HCT116 (cell line): ENCODE measurements at regions of chr15 and their contacts with region 1.

Region 1: GRCh38 chr15:66851226-66852071 is 149.4 kb downstream of the SMAD6 start:
- DNase-seq: peak; percentile 59
- ATAC-seq: peak; percentile 94
- H3K4me3 ChIP-seq: no peak overlapping the region
- H3K27ac ChIP-seq: no peak overlapping the region
- H3K4me1 ChIP-seq: peaks cover 11 to 18% of the 10 kb centered on the region in 2 experiments; a peak in 3 of 4 replicates
- H3K27me3 ChIP-seq: no peaks in the 10 kb centered on the region
- CTCF ChIP-seq: peak; percentile 87 to 95 (median 94)
- POLR2A ChIP-seq: no peak
- RAD21 ChIP-seq: peak; percentile 86

Region 2: GRCh38 chr15:66603301-66604179 is 247.9 kb before region 1 on chr15:
- CTCF ChIA-PET with region 1: interaction called, 22 read pairs
- POLR2A ChIA-PET with region 1: no interaction called
- RAD21 ChIA-PET with region 1: interaction called, 3 to 12 read pairs
- intact Hi-C with region 1: loop called (anchors 1 kb)
- DNase-seq: peak; percentile 43
- ATAC-seq: peak; percentile 99
- H3K4me3 ChIP-seq: no peak overlapping the region
- H3K27ac ChIP-seq: no peak overlapping the region
- H3K4me1 ChIP-seq: peaks cover 0 to 3% of the 10 kb centered on the region in 2 experiments; a peak in 1 of 4 replicates
- H3K27me3 ChIP-seq: no peaks in the 10 kb centered on the region; the same call in 1 of the 2 replicates
- CTCF ChIP-seq: peak; percentile 80 to 93 (median 84)
- POLR2A ChIP-seq: no peak
- RAD21 ChIP-seq: peak; percentile 94

Region 3: GRCh38 chr15:66700802-66701421 is 150.5 kb before region 1 on chr15:
- CTCF ChIA-PET with region 1: interaction called, 15 read pairs
- POLR2A ChIA-PET with region 1: no interaction called
- RAD21 ChIA-PET with region 1: interaction called, 3 to 4 read pairs
- intact Hi-C with region 1: loop called (anchors 5 kb)
- DNase-seq: peak; percentile 87
- ATAC-seq: peak; percentile 70
- H3K4me3 ChIP-seq: peak overlapping the region; percentile 55 to 74
- H3K27ac ChIP-seq: peak overlapping the region; percentile 79
- H3K4me1 ChIP-seq: peaks cover 27 to 62% of the 10 kb centered on the region in 2 experiments
- H3K27me3 ChIP-seq: no peaks in the 10 kb centered on the region
- CTCF ChIP-seq: no peak
- POLR2A ChIP-seq: no peak
- RAD21 ChIP-seq: no peak

Region 4: DNA sequence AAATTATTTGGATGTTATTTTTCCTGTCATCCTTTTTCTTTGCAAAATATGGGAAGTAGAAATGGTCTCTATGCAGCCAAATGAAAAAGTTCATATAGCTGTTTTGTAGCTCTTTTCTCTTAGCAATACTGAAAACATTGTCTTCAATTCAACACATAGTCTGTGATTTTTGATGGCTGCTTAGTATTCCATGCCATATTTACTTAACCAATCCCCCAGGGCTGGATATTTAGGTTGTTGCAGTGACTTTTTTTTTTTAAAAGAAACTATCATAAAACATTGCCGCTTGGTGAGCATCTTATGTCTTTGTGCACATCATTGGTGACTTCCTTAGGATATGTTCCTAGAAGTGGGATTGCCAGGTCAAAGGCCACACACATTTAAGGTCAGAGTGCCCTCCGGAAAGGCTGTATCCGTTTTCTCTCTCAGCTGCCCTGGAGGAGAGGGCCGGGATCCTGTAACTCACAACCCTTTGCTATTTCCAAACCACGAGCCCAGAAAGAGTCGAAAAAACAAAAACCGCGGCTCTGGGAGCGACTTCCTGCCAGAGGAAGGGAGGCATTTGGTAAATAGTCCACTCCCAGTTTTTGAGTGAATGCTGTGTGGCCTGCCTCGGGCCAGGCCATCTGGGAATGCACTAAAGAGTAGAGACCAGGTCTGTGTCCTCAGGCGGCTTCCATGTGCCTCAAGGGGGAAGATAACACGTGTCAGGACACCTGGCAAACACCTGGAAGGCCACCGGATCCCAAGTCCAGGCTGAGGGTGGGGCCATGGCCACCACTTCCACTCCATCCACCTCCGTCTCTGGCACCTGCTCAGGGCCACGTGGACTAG is 107.5 kb before region 1 on chr15:
- CTCF ChIA-PET with region 1: no interaction called
- POLR2A ChIA-PET with region 1: no interaction called
- RAD21 ChIA-PET with region 1: no interaction called
- intact Hi-C with region 1: no loop called
- DNase-seq: no peak
- ATAC-seq: no peak
- H3K4me3 ChIP-seq: no peak overlapping the region
- H3K27ac ChIP-seq: peak overlapping the region; percentile 1; the same call in 1 of the 2 replicates
- H3K4me1 ChIP-seq: peaks cover 42 to 47% of the 10 kb centered on the region in 2 experiments
- H3K27me3 ChIP-seq: no peaks in the 10 kb centered on the region
- CTCF ChIP-seq: no peak
- POLR2A ChIP-seq: no peak
- RAD21 ChIP-seq: no peak

Region 5: DNA sequence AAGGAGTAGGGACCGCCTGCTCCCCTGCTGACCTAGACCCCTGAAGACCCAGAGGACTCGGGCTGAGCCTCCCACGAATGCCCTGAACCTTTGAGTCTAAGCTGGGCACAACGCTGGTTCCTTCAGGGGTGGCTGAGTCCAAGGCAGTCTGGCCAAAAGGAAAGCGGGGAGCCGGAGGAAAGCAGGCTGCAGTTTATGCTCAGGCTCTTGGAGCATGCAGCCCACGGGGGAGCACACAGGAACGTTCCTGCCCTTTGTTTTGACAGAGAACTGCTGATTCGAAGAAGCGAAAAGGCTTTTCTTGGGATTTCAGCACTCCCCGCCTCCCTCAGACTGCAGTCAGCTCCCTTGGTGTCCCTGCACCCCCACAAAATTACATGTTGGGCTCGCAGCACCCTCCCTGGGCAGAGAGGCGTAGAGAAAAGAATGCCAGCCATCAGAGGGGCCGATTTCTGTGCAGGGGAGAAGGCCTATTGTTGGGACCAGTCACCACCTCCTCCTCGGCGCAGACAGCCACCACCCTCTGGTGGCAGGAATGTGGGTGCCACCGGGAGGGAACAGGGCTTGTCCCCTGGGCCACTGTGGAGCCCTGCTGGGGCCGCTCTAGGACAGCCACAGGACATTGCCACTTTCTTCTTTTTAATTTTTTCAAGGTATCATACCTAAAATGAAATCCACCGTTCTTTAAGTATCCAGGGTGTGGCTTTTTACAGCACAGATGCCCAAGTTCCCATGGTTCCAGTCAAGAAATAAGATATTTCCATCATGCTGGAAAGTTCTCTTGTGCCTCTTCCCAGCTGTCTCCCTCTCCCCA is 77.2 kb before region 1 on chr15:
- CTCF ChIA-PET with region 1: interaction called, 22 read pairs
- POLR2A ChIA-PET with region 1: no interaction called
- RAD21 ChIA-PET with region 1: interaction called in 1 of 2 experiments, 3 read pairs
- intact Hi-C with region 1: loop called (anchors 1 kb)
- DNase-seq: peak; percentile 72
- ATAC-seq: peak; percentile 97
- H3K4me3 ChIP-seq: no peak overlapping the region
- H3K27ac ChIP-seq: peak overlapping the region; percentile 44
- H3K4me1 ChIP-seq: peaks cover 68 to 76% of the 10 kb centered on the region in 2 experiments
- H3K27me3 ChIP-seq: no peaks in the 10 kb centered on the region
- CTCF ChIP-seq: peak; percentile 98 to 99 (median 99)
- POLR2A ChIP-seq: no peak
- RAD21 ChIP-seq: peak; percentile 100

Region 6: GRCh38 chr15:66789029-66790025 is 62.1 kb before region 1 on chr15:
- CTCF ChIA-PET with region 1: interaction called, 41 read pairs
- POLR2A ChIA-PET with region 1: no interaction called
- RAD21 ChIA-PET with region 1: interaction called, 6 to 9 read pairs
- intact Hi-C with region 1: loop called (anchors 2 kb)
- DNase-seq: no peak
- ATAC-seq: peak; percentile 96
- H3K4me3 ChIP-seq: no peak overlapping the region
- H3K27ac ChIP-seq: no peak overlapping the region
- H3K4me1 ChIP-seq: peaks cover 0 to 3% of the 10 kb centered on the region in 2 experiments; a peak in 1 of 4 replicates
- H3K27me3 ChIP-seq: no peaks in the 10 kb centered on the region
- CTCF ChIP-seq: peak; percentile 60 to 70 (median 63); a peak in 5 of 6 replicates
- POLR2A ChIP-seq: no peak
- RAD21 ChIP-seq: peak; percentile 64

Region 7: GRCh38 chr15:66862111-66862815 is 10.8 kb after region 1 on chr15:
- CTCF ChIA-PET with region 1: interaction called, 10 read pairs
- POLR2A ChIA-PET with region 1: no interaction called
- RAD21 ChIA-PET with region 1: no interaction called
- intact Hi-C with region 1: no loop called
- DNase-seq: no peak
- ATAC-seq: peak; percentile 77
- H3K4me3 ChIP-seq: no peak overlapping the region
- H3K27ac ChIP-seq: no peak overlapping the region
- H3K4me1 ChIP-seq: peaks cover 0 to 22% of the 10 kb centered on the region in 2 experiments; a peak in 3 of 4 replicates
- H3K27me3 ChIP-seq: no peaks in the 10 kb centered on the region
- CTCF ChIP-seq: no peak; a peak in 1 of 6 replicates
- POLR2A ChIP-seq: no peak
- RAD21 ChIP-seq: no peak

Region 8: GRCh38 chr15:67358812-67359211 is 507.4 kb after region 1 on chr15:
- CTCF ChIA-PET with region 1: no interaction called
- POLR2A ChIA-PET with region 1: no interaction called
- RAD21 ChIA-PET with region 1: no interaction called
- intact Hi-C with region 1: no loop called
- DNase-seq: no peak
- ATAC-seq: no peak
- H3K4me3 ChIP-seq: no peak overlapping the region
- H3K27ac ChIP-seq: no peak overlapping the region
- H3K4me1 ChIP-seq: no peaks in the 10 kb centered on the region
- H3K27me3 ChIP-seq: no peaks in the 10 kb centered on the region
- CTCF ChIP-seq: no peak
- POLR2A ChIP-seq: no peak
- RAD21 ChIP-seq: no peak